ENCODE measurements at regions of chr9 and their contacts with region 1.

Region 1: GRCh38 chr9:94199776-94200175 is 59.3 kb upstream of the ZNF169 start:
- DNase-seq: no peak
- H3K4me3 ChIP-seq: no peak overlapping the region
- H3K27ac ChIP-seq: no peak overlapping the region
- H3K4me1 ChIP-seq: no peaks in the 10 kb centered on the region
- H3K27me3 ChIP-seq: no peaks in the 10 kb centered on the region
- CTCF ChIP-seq: no peak
- POLR2A ChIP-seq: no peak

Region 2: DNA sequence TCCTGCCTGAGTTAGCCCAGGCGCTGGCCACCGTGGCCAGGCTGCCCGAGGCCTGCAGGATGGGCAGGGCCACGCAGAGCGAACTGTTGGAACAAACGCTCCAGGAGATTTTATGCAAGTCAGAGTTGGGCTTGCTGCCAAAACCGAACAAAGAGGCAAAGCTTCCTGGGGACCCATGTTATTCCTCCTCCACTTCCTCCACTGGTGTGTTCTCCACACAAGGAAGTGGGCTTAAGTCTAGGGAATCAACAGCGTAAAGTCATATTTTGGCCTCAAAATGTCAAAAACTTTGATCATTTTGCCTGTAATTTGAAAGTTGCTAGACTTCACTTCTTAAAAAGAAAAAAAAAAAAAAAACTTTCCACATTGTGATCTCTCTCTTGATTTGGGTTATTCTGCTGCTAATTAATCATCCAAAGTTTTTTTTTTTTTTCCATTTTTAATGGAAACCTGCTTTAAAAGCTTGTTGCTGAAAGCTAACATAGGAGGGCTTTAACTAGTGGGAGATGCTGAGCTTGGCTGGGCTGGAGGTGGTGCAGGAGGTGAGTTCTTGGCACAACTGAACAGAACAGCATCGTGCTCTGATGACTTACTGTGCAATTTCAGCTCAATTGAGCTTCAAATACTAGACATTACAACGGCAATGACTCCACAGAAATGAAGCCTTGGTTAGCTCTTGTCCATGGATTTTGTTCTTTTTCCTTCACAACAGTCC is 42.6 kb before region 1 on chr9:
- intact Hi-C with region 1: loop called in 1 of 2 experiments (anchors 10 kb)
- DNase-seq: peak; percentile 54 to 88 (median 76)
- H3K4me3 ChIP-seq: no peak overlapping the region
- H3K27ac ChIP-seq: peak overlapping the region in 2 of 5 donors; percentile 8 to 73
- H3K4me1 ChIP-seq: peaks cover 0 to 7% of the 10 kb centered on the region in 2 donors
- H3K27me3 ChIP-seq: no peaks in the 10 kb centered on the region
- CTCF ChIP-seq: no peak
- POLR2A ChIP-seq: no peak

Measured in adrenal gland (tissue), 19 donors.